ENCODE measurements at regions of chr13 and their contacts with region 1.

Region 1: DNA sequence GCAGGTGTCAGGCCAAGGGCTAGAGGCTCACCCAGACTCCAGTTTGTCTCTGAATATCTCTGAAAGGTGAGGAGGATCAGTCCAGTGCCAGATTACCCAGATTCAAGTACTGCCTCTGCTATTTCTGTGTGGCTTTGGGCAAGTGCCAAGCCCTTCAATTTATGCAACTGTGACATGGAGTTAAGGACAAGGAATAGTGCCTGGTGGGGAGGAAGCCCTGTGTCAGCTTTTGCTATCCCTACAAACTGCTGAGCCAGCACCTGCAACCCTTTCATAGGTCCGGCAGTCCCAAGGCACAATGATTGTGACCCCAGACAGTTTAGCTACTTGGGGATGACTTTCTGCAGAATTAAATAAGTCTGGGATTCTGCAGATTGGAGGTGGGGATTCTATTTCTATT is 123.0 kb downstream of the KL start:
- DNase-seq: peak; percentile 75
- ATAC-seq: peak; percentile 86

Region 2: DNA sequence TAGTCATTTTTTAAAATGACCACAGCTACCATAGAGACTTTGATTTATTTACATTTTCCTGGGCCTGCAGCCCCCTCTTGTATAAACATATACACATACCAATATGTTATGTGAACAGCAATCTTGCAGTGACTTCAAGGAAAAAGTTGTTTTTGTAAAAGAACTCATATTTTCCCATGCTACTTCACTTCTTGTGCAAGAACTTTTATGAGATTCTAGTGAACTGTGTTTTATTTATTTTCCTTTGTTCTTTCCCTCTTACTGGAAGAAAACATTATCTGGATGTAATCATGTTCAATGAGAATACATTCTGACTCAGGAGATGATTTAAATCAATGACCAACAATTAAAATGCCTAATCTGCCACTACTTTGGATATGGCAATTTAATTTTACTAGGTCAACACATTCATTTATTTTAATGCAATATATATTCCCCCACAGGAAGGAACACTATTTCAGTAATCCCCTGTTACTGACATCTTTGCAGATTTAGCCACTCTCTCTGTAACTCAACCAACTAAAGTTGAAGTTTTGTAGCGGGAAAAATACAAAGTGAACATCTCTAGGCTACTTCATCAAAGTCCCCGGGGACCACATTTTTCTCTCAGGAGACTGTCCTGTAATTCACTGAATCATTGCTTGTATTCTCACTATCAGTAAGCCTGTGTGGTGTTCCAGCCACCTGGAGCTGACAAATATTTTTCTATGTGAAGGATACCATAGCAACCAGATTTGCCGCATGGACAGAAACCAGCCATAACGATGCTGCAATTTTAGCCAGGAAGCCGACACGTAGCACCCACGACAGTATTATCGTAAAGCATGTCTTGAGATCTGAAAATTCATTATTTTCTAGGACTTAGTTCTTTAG is 55.9 kb after region 1 on chr13:
- intact Hi-C with region 1: loop called (anchors 5 kb)
- DNase-seq: no peak
- ATAC-seq: peak; percentile 61

Region 3: GRCh38 chr13:33441015-33441414 is 301.8 kb after region 1 on chr13:
- intact Hi-C with region 1: no loop called
- DNase-seq: no peak
- ATAC-seq: no peak